Kidney (tissue), 22 donors: ENCODE measurements at regions of chr14 and their contacts with region 1.

Region 1: DNA sequence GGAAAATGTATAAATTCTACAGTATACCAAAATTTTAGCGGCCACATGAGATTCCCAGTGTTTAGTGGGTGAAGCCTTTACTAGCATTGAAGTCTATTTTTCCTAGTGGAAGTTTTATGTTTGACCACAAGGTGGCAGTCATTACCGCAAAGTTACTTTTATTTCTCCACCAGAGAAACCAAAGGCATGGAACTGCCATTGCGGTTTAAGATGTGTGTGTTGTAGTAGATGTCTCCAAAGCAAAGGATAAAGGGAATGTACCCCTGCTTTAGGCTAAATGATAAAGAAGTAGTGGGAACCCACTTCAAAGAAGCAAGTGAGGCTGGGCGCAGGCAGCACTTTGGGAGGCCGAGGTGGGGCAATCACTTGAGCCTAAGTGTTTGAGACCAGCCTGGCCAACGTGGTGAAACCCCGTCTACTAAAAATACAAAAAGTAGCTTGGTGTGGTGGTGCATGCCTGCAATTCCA is 140.5 kb downstream of the PRKCH start:
- DNase-seq: peak in 3 of 5 donors; percentile 56 to 89 (median 86)
- H3K4me3 ChIP-seq: no peak overlapping the region
- H3K27ac ChIP-seq: no peak overlapping the region
- H3K4me1 ChIP-seq: peaks cover 0 to 8% (median 2%) of the 10 kb centered on the region in 3 donors
- H3K27me3 ChIP-seq: no peaks in the 10 kb centered on the region
- CTCF ChIP-seq: peak; percentile 76

Region 2: GRCh38 chr14:60839657-60840056 is 622.2 kb before region 1 on chr14:
- intact Hi-C with region 1: no loop called
- DNase-seq: peak in 1 of 5 donors; percentile 52
- H3K4me3 ChIP-seq: no peak overlapping the region
- H3K27ac ChIP-seq: no peak overlapping the region
- H3K4me1 ChIP-seq: no peaks in the 10 kb centered on the region
- H3K27me3 ChIP-seq: no peaks in the 10 kb centered on the region
- CTCF ChIP-seq: no peak

Region 3: GRCh38 chr14:61628016-61628725 is 166.3 kb after region 1 on chr14:
- intact Hi-C with region 1: no loop called
- DNase-seq: no peak
- H3K4me3 ChIP-seq: no peak overlapping the region
- H3K27ac ChIP-seq: no peak overlapping the region
- H3K4me1 ChIP-seq: peaks cover 0 to 4% (median 0%) of the 10 kb centered on the region in 3 donors
- H3K27me3 ChIP-seq: no peaks in the 10 kb centered on the region
- CTCF ChIP-seq: no peak

Region 4: GRCh38 chr14:61730756-61731373 is 269.0 kb after region 1 on chr14:
- intact Hi-C with region 1: loop called (anchors 10 kb)
- DNase-seq: peak in 1 of 5 donors; percentile 26
- H3K4me3 ChIP-seq: no peak overlapping the region
- H3K27ac ChIP-seq: peak overlapping the region in 1 of 2 donors; percentile 44
- H3K4me1 ChIP-seq: no peaks in the 10 kb centered on the region
- H3K27me3 ChIP-seq: no peaks in the 10 kb centered on the region
- CTCF ChIP-seq: peak; percentile 36